HepG2 (cell line): ENCODE measurements at regions of chr4 and their contacts with region 1.

Region 1: DNA sequence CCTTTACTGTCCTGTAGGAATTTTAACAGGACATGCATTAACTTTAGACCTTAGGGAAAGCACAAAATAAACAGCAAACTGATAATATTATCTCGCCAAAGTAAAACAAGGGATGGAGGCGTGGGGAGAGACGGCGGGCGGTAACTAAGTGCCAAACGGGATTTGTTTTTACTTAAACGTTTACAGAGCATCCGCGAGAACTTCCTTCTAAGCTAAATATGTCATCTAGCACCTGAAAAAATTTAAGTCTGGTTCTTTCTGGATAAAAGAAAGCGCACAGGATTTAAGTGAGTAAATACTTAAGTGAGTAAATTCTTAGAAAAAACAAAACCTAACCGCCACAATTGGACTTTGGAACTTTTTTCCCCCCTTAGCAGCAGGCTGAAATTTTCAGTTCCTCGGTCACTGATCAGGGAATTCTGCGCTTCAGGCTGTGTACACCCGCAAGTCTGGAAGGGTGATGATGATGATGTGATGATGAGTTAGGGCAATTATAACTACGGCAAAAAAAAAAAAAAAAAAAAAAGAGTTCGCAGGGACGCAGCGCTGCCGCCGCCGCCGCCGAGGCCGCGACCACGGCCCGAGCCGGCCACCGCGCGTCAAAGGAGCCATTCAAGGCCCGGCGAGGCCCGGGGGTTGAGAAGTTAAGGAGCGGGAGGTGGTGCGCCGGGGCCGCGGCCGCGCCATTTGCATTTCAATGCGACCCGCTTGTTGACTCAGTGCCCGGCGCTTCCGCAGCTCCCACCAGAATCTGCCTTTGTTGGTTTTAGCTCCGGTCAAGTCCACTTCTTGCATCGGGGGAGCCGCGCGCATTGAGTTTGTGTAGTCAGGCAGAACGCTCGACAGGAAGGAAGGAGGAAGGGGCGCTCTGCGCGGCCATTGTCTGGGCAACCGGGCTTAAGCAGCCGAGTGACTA is 108.8 kb downstream of the SPRY1 start:
- DNase-seq: peak; percentile 97
- ATAC-seq: peak; percentile 97
- H3K4me3 ChIP-seq: peak overlapping the region; percentile 43 to 65 (median 59)
- H3K27ac ChIP-seq: peak overlapping the region; percentile 97
- H3K4me1 ChIP-seq: peaks cover 48% of the 10 kb centered on the region
- H3K27me3 ChIP-seq: no peaks in the 10 kb centered on the region
- CTCF ChIP-seq: peak; percentile 43; the same call in 1 of the 2 replicates
- EP300 ChIP-seq: peak in 1 of 2 experiments; percentile 90; a peak in 2 of 4 replicates
- POLR2A ChIP-seq: peak; percentile 65 to 69; a peak in 3 of 4 replicates
- RAD21 ChIP-seq: peak; percentile 73

Region 2: GRCh38 chr4:123405267-123405865 is 100.0 kb before region 1 on chr4:
- CTCF ChIA-PET with region 1: no interaction called
- POLR2A ChIA-PET with region 1: interaction called, 21 read pairs
- in situ Hi-C with region 1: no loop called
- intact Hi-C with region 1: loop called (anchors 2 kb)
- DNase-seq: no peak
- ATAC-seq: no peak
- H3K4me3 ChIP-seq: no peak overlapping the region
- H3K27ac ChIP-seq: no peak overlapping the region
- H3K4me1 ChIP-seq: peaks cover 93% of the 10 kb centered on the region
- H3K27me3 ChIP-seq: no peaks in the 10 kb centered on the region
- CTCF ChIP-seq: no peak
- EP300 ChIP-seq: no peak
- POLR2A ChIP-seq: no peak
- RAD21 ChIP-seq: no peak

Region 3: DNA sequence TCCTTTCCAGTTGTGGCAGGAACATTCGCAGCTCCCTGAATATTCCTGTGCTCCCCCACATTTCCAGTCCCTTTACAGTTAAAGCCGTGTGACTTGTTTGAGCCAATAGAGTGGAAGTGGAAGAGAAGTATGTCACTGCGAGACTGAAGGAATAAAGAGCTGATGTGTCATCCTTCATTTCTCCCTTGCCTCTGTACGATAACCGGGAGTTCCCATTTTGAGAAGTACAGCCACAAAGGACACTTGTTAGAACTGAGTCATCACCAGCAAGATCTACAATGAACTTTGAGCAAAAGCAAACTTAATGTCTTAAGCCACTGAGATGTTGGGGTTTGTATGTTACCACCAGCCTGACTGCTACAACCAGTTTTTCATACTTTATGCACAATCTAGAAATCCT is 16.4 kb before region 1 on chr4:
- CTCF ChIA-PET with region 1: no interaction called
- POLR2A ChIA-PET with region 1: interaction called, 17 read pairs
- in situ Hi-C with region 1: no loop called
- intact Hi-C with region 1: no loop called
- DNase-seq: peak; percentile 80
- ATAC-seq: peak; percentile 74
- H3K4me3 ChIP-seq: no peak overlapping the region
- H3K27ac ChIP-seq: peak overlapping the region; percentile 17
- H3K4me1 ChIP-seq: peaks cover 40% of the 10 kb centered on the region
- H3K27me3 ChIP-seq: no peaks in the 10 kb centered on the region
- CTCF ChIP-seq: no peak
- EP300 ChIP-seq: peak in 1 of 2 experiments; percentile 50; a peak in 2 of 4 replicates
- POLR2A ChIP-seq: no peak
- RAD21 ChIP-seq: no peak

Region 4: DNA sequence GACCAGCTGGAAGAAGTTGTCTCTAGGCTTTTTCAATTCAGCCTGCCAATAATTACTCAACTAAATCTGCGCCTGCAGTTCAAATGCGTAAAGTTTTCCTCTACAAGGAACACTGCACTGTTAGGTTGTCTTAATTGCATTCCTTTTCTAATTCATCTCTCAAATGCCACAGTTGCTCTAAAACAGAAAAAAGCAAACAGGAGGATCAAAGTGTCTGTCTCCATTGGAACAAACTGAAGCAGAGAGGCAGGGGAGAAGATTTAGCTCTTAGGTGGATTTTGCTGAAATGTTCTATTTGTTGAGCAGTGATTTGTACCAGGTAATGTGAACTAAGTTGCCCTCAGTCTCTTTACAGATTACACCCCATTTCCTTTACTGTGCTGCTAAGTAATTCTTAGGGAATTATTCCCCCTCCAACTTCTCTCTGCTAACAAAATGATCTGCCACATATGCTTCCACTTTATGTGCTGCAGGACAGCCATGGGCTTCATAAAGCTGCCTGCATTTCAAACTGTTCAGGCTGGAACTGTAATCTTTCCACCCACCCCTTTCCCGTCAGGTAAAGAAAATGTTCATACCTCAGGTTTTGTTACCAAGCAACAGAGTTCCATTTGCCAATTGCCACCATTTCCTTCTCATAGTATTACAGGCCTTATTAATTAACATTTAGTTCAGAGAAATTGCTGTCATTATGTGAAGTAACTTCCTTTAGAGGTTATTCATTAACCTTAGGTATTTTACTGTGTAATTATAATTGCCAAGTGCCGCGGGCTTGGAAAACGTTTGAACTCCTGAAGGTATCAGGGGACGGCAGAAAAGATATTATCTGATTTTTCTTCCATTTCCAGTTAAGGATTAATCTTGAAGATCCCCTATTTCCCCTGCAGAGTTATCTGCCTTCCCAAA is 40.6 kb after region 1 on chr4:
- CTCF ChIA-PET with region 1: no interaction called
- POLR2A ChIA-PET with region 1: interaction called, 13 read pairs
- in situ Hi-C with region 1: no loop called
- intact Hi-C with region 1: loop called (anchors 1 kb)
- DNase-seq: peak; percentile 68
- ATAC-seq: peak; percentile 89
- H3K4me3 ChIP-seq: peak overlapping the region; percentile 48 to 59 (median 59); a peak in 5 of 6 replicates
- H3K27ac ChIP-seq: peak overlapping the region; percentile 89
- H3K4me1 ChIP-seq: peaks cover 51% of the 10 kb centered on the region
- H3K27me3 ChIP-seq: no peaks in the 10 kb centered on the region
- CTCF ChIP-seq: no peak
- EP300 ChIP-seq: peak in 1 of 2 experiments; percentile 46; a peak in 2 of 4 replicates
- POLR2A ChIP-seq: peak in 1 of 2 experiments; percentile 53; a peak in 1 of 4 replicates
- RAD21 ChIP-seq: no peak

Region 5: GRCh38 chr4:123564758-123565346 is 59.5 kb after region 1 on chr4:
- CTCF ChIA-PET with region 1: no interaction called
- POLR2A ChIA-PET with region 1: interaction called, 16 read pairs
- in situ Hi-C with region 1: no loop called
- intact Hi-C with region 1: loop called (anchors 1 kb)
- DNase-seq: peak; percentile 92
- ATAC-seq: peak; percentile 100
- H3K4me3 ChIP-seq: no peak overlapping the region
- H3K27ac ChIP-seq: no peak overlapping the region
- H3K4me1 ChIP-seq: peaks cover 35% of the 10 kb centered on the region
- H3K27me3 ChIP-seq: no peaks in the 10 kb centered on the region
- CTCF ChIP-seq: peak; percentile 92
- EP300 ChIP-seq: peak in 1 of 2 experiments; percentile 63; a peak in 2 of 4 replicates
- POLR2A ChIP-seq: no peak
- RAD21 ChIP-seq: peak; percentile 89

Region 6: GRCh38 chr4:123649645-123650391 is 144.5 kb after region 1 on chr4:
- CTCF ChIA-PET with region 1: no interaction called
- POLR2A ChIA-PET with region 1: interaction called, 8 read pairs
- in situ Hi-C with region 1: no loop called
- intact Hi-C with region 1: loop called (anchors 2 kb)
- DNase-seq: peak; percentile 92
- ATAC-seq: peak; percentile 97
- H3K4me3 ChIP-seq: peak overlapping the region; percentile 23 to 60 (median 47); a peak in 4 of 6 replicates
- H3K27ac ChIP-seq: peak overlapping the region; percentile 92
- H3K4me1 ChIP-seq: peaks cover 60% of the 10 kb centered on the region
- H3K27me3 ChIP-seq: no peaks in the 10 kb centered on the region
- CTCF ChIP-seq: no peak
- EP300 ChIP-seq: peak; percentile 58 to 73
- POLR2A ChIP-seq: peak; percentile 45 to 92; a peak in 3 of 4 replicates
- RAD21 ChIP-seq: no peak

Region 7: GRCh38 chr4:123870061-123870876 is 364.9 kb after region 1 on chr4:
- CTCF ChIA-PET with region 1: no interaction called
- POLR2A ChIA-PET with region 1: no interaction called
- in situ Hi-C with region 1: no loop called
- intact Hi-C with region 1: no loop called
- DNase-seq: peak; percentile 45
- ATAC-seq: peak; percentile 66; the same call in 2 of the 3 replicates
- H3K4me3 ChIP-seq: no peak overlapping the region
- H3K27ac ChIP-seq: peak overlapping the region; percentile 23
- H3K4me1 ChIP-seq: peaks cover 36% of the 10 kb centered on the region
- H3K27me3 ChIP-seq: no peaks in the 10 kb centered on the region
- CTCF ChIP-seq: no peak
- EP300 ChIP-seq: peak in 1 of 2 experiments; percentile 38; a peak in 1 of 4 replicates
- POLR2A ChIP-seq: no peak
- RAD21 ChIP-seq: no peak